Colonic mucosa (tissue), 4 donors: ENCODE measurements at regions of chr5 and their contacts with region 1.

Region 1: DNA sequence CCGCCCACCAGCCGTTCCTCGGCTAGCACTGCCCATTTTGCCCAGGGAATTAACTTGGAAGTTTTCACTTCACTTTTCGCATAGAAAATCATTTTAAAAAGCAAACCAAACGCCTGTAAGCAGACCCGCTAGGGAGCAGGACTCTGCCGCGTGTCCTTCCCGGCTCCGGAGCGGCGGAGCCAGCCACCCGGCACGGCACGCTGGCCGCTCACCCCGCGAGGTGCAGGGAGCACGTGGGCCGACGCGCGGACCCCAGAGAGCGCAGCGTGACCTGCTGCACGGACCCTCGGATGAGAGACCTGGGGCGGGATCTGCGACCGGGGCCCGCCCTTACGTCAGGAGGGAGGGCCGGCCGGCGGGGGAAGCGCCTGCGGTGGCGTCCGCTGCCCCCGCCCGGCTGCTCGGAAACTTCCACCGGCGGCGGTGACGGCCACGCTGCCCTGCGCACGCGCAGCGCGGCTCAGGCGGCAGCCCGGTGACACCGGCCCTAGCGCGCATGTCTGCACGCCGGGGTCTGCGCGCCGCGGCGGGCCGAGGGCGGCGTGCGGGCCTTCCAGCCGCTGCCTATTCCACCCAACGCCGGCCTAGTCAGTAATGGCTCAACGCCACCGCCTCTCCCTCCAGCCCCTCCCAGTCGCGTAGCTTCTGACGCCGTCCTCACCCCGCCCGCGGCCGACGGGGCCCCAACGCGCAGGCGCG is 506 bp upstream of the TENT4A start:
- DNase-seq: peak; percentile 95
- H3K4me3 ChIP-seq: peak overlapping the region; percentile 82
- H3K27ac ChIP-seq: peak overlapping the region; percentile 95
- H3K4me1 ChIP-seq: peaks cover 9% of the 10 kb centered on the region
- H3K27me3 ChIP-seq: no peaks in the 10 kb centered on the region
- CTCF ChIP-seq: no peak

Region 2: GRCh38 chr5:6480133-6481051 is 232.3 kb before region 1 on chr5:
- intact Hi-C with region 1: no loop called
- DNase-seq: no peak
- H3K4me3 ChIP-seq: no peak overlapping the region
- H3K27ac ChIP-seq: no peak overlapping the region
- H3K4me1 ChIP-seq: no peaks in the 10 kb centered on the region
- H3K27me3 ChIP-seq: no peaks in the 10 kb centered on the region
- CTCF ChIP-seq: no peak

Region 3: GRCh38 chr5:6632917-6633468 is 79.7 kb before region 1 on chr5 and contains the starts of genes NSUN2 and SRD5A1:
- intact Hi-C with region 1: loop called (anchors 2 kb)
- DNase-seq: peak; percentile 93
- H3K4me3 ChIP-seq: peak within 1 kb of the TSS; percentile 99
- H3K27ac ChIP-seq: peak within 1 kb of the TSS; percentile 81
- H3K4me1 ChIP-seq: peaks cover 12% of the 10 kb centered on the region
- H3K27me3 ChIP-seq: no peaks in the 10 kb centered on the region
- CTCF ChIP-seq: no peak
- total RNA-seq, gene NSUN2: 46.9 to 69.9 TPM
- total RNA-seq, gene SRD5A1: 15.9 to 17.4 TPM

Region 4: GRCh38 chr5:6979061-6979460 is 266.3 kb after region 1 on chr5:
- intact Hi-C with region 1: no loop called
- DNase-seq: no peak
- H3K4me3 ChIP-seq: no peak overlapping the region
- H3K27ac ChIP-seq: no peak overlapping the region
- H3K4me1 ChIP-seq: no peaks in the 10 kb centered on the region
- H3K27me3 ChIP-seq: no peaks in the 10 kb centered on the region
- CTCF ChIP-seq: no peak

Region 5: GRCh38 chr5:6995115-6995514 is 282.4 kb after region 1 on chr5:
- intact Hi-C with region 1: no loop called
- DNase-seq: no peak
- H3K4me3 ChIP-seq: no peak overlapping the region
- H3K27ac ChIP-seq: no peak overlapping the region
- H3K4me1 ChIP-seq: no peaks in the 10 kb centered on the region
- H3K27me3 ChIP-seq: no peaks in the 10 kb centered on the region
- CTCF ChIP-seq: no peak

Region 6: GRCh38 chr5:7445068-7445467 is 732.3 kb after region 1 on chr5:
- intact Hi-C with region 1: no loop called
- DNase-seq: no peak
- H3K4me3 ChIP-seq: no peak overlapping the region
- H3K27ac ChIP-seq: no peak overlapping the region
- H3K4me1 ChIP-seq: no peaks in the 10 kb centered on the region
- H3K27me3 ChIP-seq: no peaks in the 10 kb centered on the region
- CTCF ChIP-seq: no peak